ENCODE measurements at regions of chr3 and their contacts with region 1.

Region 1: DNA sequence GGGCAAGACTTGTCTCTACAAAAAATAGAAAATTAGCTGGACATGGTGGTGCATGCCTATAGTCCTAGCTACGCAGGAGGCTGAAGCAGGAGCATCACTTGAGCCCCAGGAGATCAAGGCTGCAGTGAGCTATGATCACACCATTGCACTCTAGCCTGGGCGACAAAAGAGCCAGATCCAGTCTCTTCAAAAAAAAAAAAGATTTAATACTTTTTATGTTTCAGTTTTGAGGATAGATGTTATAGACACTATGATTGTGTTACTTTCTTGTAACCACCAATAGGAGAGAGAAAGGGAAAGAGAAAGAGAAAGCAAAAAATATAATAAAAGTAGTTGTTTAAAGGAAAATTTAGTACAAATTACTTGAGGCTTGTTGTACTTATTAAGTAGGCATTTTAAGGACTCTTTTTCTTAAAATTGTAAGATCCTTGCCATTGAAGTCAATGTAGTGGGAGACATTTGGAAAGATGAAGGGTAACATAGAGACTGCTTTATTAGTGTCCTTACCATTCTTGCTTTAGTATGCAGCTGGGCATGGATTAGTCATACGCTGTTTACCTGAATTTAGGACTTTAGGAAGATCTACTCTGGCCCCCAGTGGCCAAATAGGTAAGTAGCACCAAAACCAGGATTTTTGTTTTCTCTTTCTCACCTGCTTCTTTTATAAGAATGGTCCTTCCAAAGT is 35.1 kb upstream of the ZDHHC23 start:
- DNase-seq: no peak
- H3K4me3 ChIP-seq: no peak overlapping the region
- H3K27ac ChIP-seq: no peak overlapping the region
- H3K4me1 ChIP-seq: no peaks in the 10 kb centered on the region
- H3K27me3 ChIP-seq: no peaks in the 10 kb centered on the region
- CTCF ChIP-seq: peak in 2 of 3 experiments; percentile 79 to 80; a peak in 3 of 4 replicates
- EP300 ChIP-seq: no peak
- POLR2A ChIP-seq: no peak
- RAD21 ChIP-seq: peak; percentile 92 to 95

Region 2: GRCh38 chr3:113838631-113839209 is 74.0 kb before region 1 on chr3 and contains the start of gene GRAMD1C:
- CTCF ChIA-PET with region 1: interaction called, 35 read pairs
- POLR2A ChIA-PET with region 1: no interaction called
- DNase-seq: peak; percentile 72 to 90
- H3K4me3 ChIP-seq: peak within 1 kb of the TSS; percentile 46 to 83 (median 73)
- H3K27ac ChIP-seq: no peak within 1 kb of the TSS
- H3K4me1 ChIP-seq: no peaks in the 10 kb centered on the region
- H3K27me3 ChIP-seq: no peaks in the 10 kb centered on the region
- CTCF ChIP-seq: peak; percentile 85 to 92 (median 88)
- EP300 ChIP-seq: no peak
- POLR2A ChIP-seq: no peak
- RAD21 ChIP-seq: peak; percentile 75 to 87
- total RNA-seq, gene GRAMD1C: 1.3 and 2.1 TPM in 2 replicates

Region 3: GRCh38 chr3:113867506-113867905 is 45.2 kb before region 1 on chr3:
- CTCF ChIA-PET with region 1: no interaction called
- POLR2A ChIA-PET with region 1: no interaction called
- DNase-seq: no peak
- H3K4me3 ChIP-seq: no peak overlapping the region
- H3K27ac ChIP-seq: no peak overlapping the region
- H3K4me1 ChIP-seq: no peaks in the 10 kb centered on the region
- H3K27me3 ChIP-seq: no peaks in the 10 kb centered on the region
- CTCF ChIP-seq: no peak
- EP300 ChIP-seq: no peak
- POLR2A ChIP-seq: no peak
- RAD21 ChIP-seq: no peak

Region 4: GRCh38 chr3:113890256-113890900 is 22.3 kb before region 1 on chr3:
- CTCF ChIA-PET with region 1: interaction called, 10 read pairs
- POLR2A ChIA-PET with region 1: no interaction called
- DNase-seq: peak in 1 of 2 experiments; percentile 49
- H3K4me3 ChIP-seq: no peak overlapping the region
- H3K27ac ChIP-seq: no peak overlapping the region
- H3K4me1 ChIP-seq: peaks cover 0 to 3% (median under 1%) of the 10 kb centered on the region in 4 experiments; a peak in 2 of 7 replicates
- H3K27me3 ChIP-seq: no peaks in the 10 kb centered on the region
- CTCF ChIP-seq: peak; percentile 14 to 49 (median 40); a peak in 3 of 4 replicates
- EP300 ChIP-seq: no peak
- POLR2A ChIP-seq: no peak
- RAD21 ChIP-seq: peak; percentile 26 to 43; a peak in 3 of 4 replicates

Region 5: DNA sequence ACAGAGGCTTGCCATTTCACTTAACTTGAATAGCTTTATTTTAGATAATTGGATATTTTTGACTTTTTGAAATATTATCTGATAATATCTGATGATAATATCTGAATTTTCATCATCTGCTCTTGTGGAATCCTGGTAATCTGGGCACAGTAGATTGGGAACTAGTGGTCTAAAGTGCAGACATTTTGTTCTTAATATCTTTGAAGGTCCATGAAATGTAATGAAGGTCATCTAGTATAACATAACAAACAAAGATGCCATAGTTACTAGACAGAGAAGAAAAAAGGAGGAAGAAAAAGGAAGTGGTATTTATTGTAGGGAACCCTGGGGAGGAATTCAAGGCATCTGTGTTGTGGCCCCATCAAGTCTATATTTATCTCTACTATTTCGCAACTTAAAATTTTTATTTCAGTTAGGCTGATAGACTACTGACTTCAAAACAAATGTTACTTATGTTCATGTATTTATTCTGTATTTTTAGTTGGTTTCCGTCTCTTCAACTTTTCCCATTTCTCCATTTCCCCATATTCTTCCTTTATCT is 13.9 kb before region 1 on chr3:
- CTCF ChIA-PET with region 1: interaction called, 11 read pairs
- POLR2A ChIA-PET with region 1: no interaction called
- DNase-seq: no peak
- H3K4me3 ChIP-seq: no peak overlapping the region
- H3K27ac ChIP-seq: no peak overlapping the region
- H3K4me1 ChIP-seq: peaks cover 0 to 3% (median 0%) of the 10 kb centered on the region in 4 experiments; a peak in 1 of 7 replicates
- H3K27me3 ChIP-seq: no peaks in the 10 kb centered on the region
- CTCF ChIP-seq: no peak
- EP300 ChIP-seq: no peak
- POLR2A ChIP-seq: no peak
- RAD21 ChIP-seq: no peak

Measured in H1 (cell line).